CD4-positive, alpha-beta T cell (primary cell): ENCODE measurements at regions of chr2 and their contacts with region 1.

Region 1: DNA sequence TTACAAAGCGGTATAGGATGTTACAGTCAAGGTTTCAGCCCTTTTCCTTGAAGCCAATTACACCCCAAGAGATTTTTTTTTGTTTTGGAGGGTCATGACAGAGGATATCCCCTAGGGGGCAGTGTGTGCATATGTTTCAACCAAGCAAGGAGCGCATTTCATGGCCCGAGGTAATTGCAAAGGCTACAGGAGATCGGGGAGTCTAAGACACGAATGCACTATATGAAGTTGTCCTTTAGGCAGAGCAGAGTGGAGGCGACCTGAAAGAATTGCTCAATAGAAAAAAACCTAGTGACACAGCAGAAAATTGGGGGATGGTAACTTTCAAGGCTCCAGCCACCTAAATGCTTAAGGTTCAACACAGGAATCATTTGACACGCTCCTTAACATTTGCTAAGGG is 219.8 kb upstream of the PARD3B start:
- DNase-seq: peak; percentile 5 to 79 (median 40)
- ATAC-seq: peak; percentile 62
- H3K4me3 ChIP-seq: no peak overlapping the region
- H3K4me3 Mint-ChIP-seq: no peak overlapping the region
- H3K27ac ChIP-seq: no peak overlapping the region
- H3K27ac Mint-ChIP-seq: no peak overlapping the region
- H3K4me1 ChIP-seq: no peaks in the 10 kb centered on the region
- H3K4me1 Mint-ChIP-seq: no peaks in the 10 kb centered on the region
- H3K27me3 ChIP-seq: peaks cover 0 to 5% of the 10 kb centered on the region in 2 experiments
- H3K27me3 Mint-ChIP-seq: peaks cover 14% of the 10 kb centered on the region
- CTCF ChIP-seq: peak; percentile 83

Region 2: GRCh38 chr2:205451901-205452512 is 1126.5 kb after region 1 on chr2:
- CTCF ChIA-PET with region 1: no interaction called
- POLR2A ChIA-PET with region 1: no interaction called
- intact Hi-C with region 1: loop called in 1 of 2 experiments (anchors 10 kb)
- DNase-seq: no peak
- ATAC-seq: no peak
- H3K4me3 ChIP-seq: no peak overlapping the region
- H3K4me3 Mint-ChIP-seq: no peak overlapping the region
- H3K27ac ChIP-seq: no peak overlapping the region
- H3K27ac Mint-ChIP-seq: no peak overlapping the region
- H3K4me1 ChIP-seq: no peaks in the 10 kb centered on the region
- H3K4me1 Mint-ChIP-seq: no peaks in the 10 kb centered on the region
- H3K27me3 ChIP-seq: peaks cover 0 to 2% of the 10 kb centered on the region in 2 experiments
- H3K27me3 Mint-ChIP-seq: no peaks in the 10 kb centered on the region
- CTCF ChIP-seq: no peak

Region 3: GRCh38 chr2:205808486-205809121 is 1483.1 kb after region 1 on chr2:
- CTCF ChIA-PET with region 1: no interaction called
- POLR2A ChIA-PET with region 1: no interaction called
- intact Hi-C with region 1: loop called (anchors 2 to 5 kb)
- DNase-seq: no peak
- ATAC-seq: no peak
- H3K4me3 ChIP-seq: no peak overlapping the region
- H3K4me3 Mint-ChIP-seq: no peak overlapping the region
- H3K27ac ChIP-seq: no peak overlapping the region
- H3K27ac Mint-ChIP-seq: no peak overlapping the region
- H3K4me1 ChIP-seq: no peaks in the 10 kb centered on the region
- H3K4me1 Mint-ChIP-seq: no peaks in the 10 kb centered on the region
- H3K27me3 ChIP-seq: no peaks in the 10 kb centered on the region
- H3K27me3 Mint-ChIP-seq: no peaks in the 10 kb centered on the region
- CTCF ChIP-seq: no peak

Region 4: GRCh38 chr2:205885492-205886099 is 1560.1 kb after region 1 on chr2:
- CTCF ChIA-PET with region 1: no interaction called
- POLR2A ChIA-PET with region 1: no interaction called
- intact Hi-C with region 1: loop called in 1 of 2 experiments (anchors 1 kb)
- DNase-seq: peak; percentile 23 to 66 (median 42)
- ATAC-seq: no peak
- H3K4me3 ChIP-seq: no peak overlapping the region
- H3K4me3 Mint-ChIP-seq: no peak overlapping the region
- H3K27ac ChIP-seq: no peak overlapping the region
- H3K27ac Mint-ChIP-seq: no peak overlapping the region
- H3K4me1 ChIP-seq: peaks cover 3% of the 10 kb centered on the region
- H3K4me1 Mint-ChIP-seq: no peaks in the 10 kb centered on the region
- H3K27me3 ChIP-seq: peaks cover 10 to 17% of the 10 kb centered on the region in 2 experiments
- H3K27me3 Mint-ChIP-seq: peaks cover 44% of the 10 kb centered on the region
- CTCF ChIP-seq: peak; percentile 62

Region 5: GRCh38 chr2:205947621-205948495 is 1622.4 kb after region 1 on chr2:
- CTCF ChIA-PET with region 1: no interaction called
- POLR2A ChIA-PET with region 1: no interaction called
- intact Hi-C with region 1: loop called (anchors 1 to 2 kb)
- DNase-seq: peak; percentile 18 to 65 (median 42)
- ATAC-seq: peak; percentile 68
- H3K4me3 ChIP-seq: no peak overlapping the region
- H3K4me3 Mint-ChIP-seq: no peak overlapping the region
- H3K27ac ChIP-seq: no peak overlapping the region
- H3K27ac Mint-ChIP-seq: no peak overlapping the region
- H3K4me1 ChIP-seq: peaks cover 7% of the 10 kb centered on the region
- H3K4me1 Mint-ChIP-seq: no peaks in the 10 kb centered on the region
- H3K27me3 ChIP-seq: peaks cover 0 to 4% of the 10 kb centered on the region in 2 experiments
- H3K27me3 Mint-ChIP-seq: peaks cover 23% of the 10 kb centered on the region
- CTCF ChIP-seq: peak; percentile 89